Naive thymus-derived CD4-positive, alpha-beta T cell (primary cell): ENCODE measurements at regions of chr6 and their contacts with region 1.

Region 1: DNA sequence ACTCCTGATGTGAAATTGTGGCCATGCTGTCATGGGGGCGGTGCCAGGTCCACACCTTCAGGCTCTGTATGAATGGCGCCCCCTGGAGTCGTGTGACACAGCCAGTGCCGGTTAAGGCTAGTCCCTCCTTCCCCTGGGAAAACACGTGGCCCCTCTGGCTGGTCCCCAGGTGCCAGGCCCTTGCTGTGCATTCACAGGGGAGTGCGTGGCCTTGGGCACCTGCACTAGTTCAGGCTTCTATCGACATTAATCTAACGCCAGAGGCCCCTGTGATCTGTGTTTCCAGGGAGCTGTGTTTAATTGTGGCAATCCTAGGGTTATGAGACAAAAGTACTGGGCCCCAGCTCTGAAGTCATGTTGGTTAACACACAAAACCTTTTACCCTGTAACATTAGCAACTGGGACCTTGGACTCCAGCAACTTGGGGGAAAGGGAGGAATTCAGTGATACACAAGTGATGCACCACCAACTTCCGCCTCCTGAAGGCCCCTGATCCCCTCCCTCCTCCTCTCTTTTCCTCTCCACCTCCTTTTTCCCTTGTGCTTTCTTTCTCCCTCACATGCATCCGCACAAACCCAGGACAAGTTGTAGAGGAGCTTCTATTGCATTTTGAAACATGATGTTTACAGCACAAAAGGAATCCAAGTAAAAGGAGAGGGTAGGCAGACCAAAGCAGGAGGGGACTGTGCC is 74.0 kb downstream of the SSR1 start:
- DNase-seq: peak; percentile 48 to 73 (median 67)
- ATAC-seq: peak; percentile 77
- H3K4me3 ChIP-seq: no peak overlapping the region
- H3K4me3 Mint-ChIP-seq: no peak overlapping the region
- H3K27ac ChIP-seq: peak overlapping the region; percentile 2
- H3K27ac Mint-ChIP-seq: peak overlapping the region in 6 of 9 donors; percentile 39 to 88 (median 75)
- H3K4me1 ChIP-seq: peaks cover 0 to 6% of the 10 kb centered on the region in 2 donors
- H3K4me1 Mint-ChIP-seq: peaks cover 17 to 41% (median 24%) of the 10 kb centered on the region in 7 donors
- H3K27me3 ChIP-seq: no peaks in the 10 kb centered on the region
- H3K27me3 Mint-ChIP-seq: no peaks in the 10 kb centered on the region

Region 2: DNA sequence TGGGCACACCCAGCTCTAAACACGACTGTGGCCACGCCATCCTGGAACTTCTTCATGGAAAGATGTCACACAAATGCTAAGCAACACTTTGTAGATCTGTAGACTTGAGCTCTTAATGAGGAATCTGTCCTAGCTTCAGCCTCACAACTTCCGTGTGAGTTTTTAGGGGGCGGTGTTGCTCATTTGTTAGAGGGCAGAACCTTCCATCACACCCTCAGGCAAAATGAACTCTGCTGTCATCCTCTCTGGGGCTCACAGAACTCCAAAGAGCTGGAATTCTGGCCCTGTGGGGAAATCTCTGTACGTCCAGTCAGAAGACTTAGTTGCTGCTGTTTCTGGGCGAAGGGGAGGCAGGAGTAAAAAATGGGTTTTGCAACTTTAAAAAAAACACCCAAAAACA is 1282.1 kb before region 1 on chr6:
- CTCF ChIA-PET with region 1: no interaction called
- POLR2A ChIA-PET with region 1: no interaction called
- intact Hi-C with region 1: no loop called
- DNase-seq: no peak
- ATAC-seq: no peak
- H3K4me3 ChIP-seq: no peak overlapping the region
- H3K4me3 Mint-ChIP-seq: no peak overlapping the region
- H3K27ac ChIP-seq: no peak overlapping the region
- H3K27ac Mint-ChIP-seq: no peak overlapping the region
- H3K4me1 ChIP-seq: no peaks in the 10 kb centered on the region
- H3K4me1 Mint-ChIP-seq: no peaks in the 10 kb centered on the region
- H3K27me3 ChIP-seq: no peaks in the 10 kb centered on the region
- H3K27me3 Mint-ChIP-seq: peaks cover 0 to 39% (median 9%) of the 10 kb centered on the region in 5 donors

Region 3: GRCh38 chr6:6676910-6677441 is 562.1 kb before region 1 on chr6:
- CTCF ChIA-PET with region 1: interaction called, 9 read pairs
- POLR2A ChIA-PET with region 1: no interaction called
- intact Hi-C with region 1: loop called (anchors 1 kb)
- DNase-seq: peak; percentile 57 to 88 (median 77)
- ATAC-seq: peak; percentile 93
- H3K4me3 ChIP-seq: no peak overlapping the region
- H3K4me3 Mint-ChIP-seq: peak overlapping the region in 8 of 10 donors; percentile 0 to 73 (median 43)
- H3K27ac ChIP-seq: no peak overlapping the region
- H3K27ac Mint-ChIP-seq: peak overlapping the region in 6 of 9 donors; percentile 28 to 95 (median 80)
- H3K4me1 ChIP-seq: peaks cover 0 to 6% of the 10 kb centered on the region in 2 donors
- H3K4me1 Mint-ChIP-seq: peaks cover 4 to 41% (median 11%) of the 10 kb centered on the region in 7 donors
- H3K27me3 ChIP-seq: no peaks in the 10 kb centered on the region
- H3K27me3 Mint-ChIP-seq: peaks cover 0 to 5% (median 0%) of the 10 kb centered on the region in 5 donors

Region 4: GRCh38 chr6:6724539-6725467 is 514.2 kb before region 1 on chr6:
- CTCF ChIA-PET with region 1: interaction called, 26 read pairs
- POLR2A ChIA-PET with region 1: interaction called, 3 read pairs
- intact Hi-C with region 1: loop called (anchors 1 kb)
- DNase-seq: peak; percentile 33 to 74 (median 62)
- ATAC-seq: peak; percentile 82
- H3K4me3 ChIP-seq: peak overlapping the region; percentile 44
- H3K4me3 Mint-ChIP-seq: peak overlapping the region; percentile 67 to 89 (median 81)
- H3K27ac ChIP-seq: no peak overlapping the region
- H3K27ac Mint-ChIP-seq: peak overlapping the region; percentile 47 to 84 (median 74)
- H3K4me1 ChIP-seq: peaks cover 0 to 5% of the 10 kb centered on the region in 2 donors
- H3K4me1 Mint-ChIP-seq: peaks cover 6 to 28% (median 12%) of the 10 kb centered on the region in 7 donors
- H3K27me3 ChIP-seq: no peaks in the 10 kb centered on the region
- H3K27me3 Mint-ChIP-seq: peaks cover 0 to 43% (median 0%) of the 10 kb centered on the region in 5 donors

Region 5: GRCh38 chr6:6788394-6789020 is 450.5 kb before region 1 on chr6:
- CTCF ChIA-PET with region 1: interaction called, 5 read pairs
- POLR2A ChIA-PET with region 1: no interaction called
- intact Hi-C with region 1: loop called in 1 of 2 experiments (anchors 1 kb)
- DNase-seq: peak in 4 of 9 donors; percentile 19 to 26 (median 24)
- ATAC-seq: peak; percentile 69
- H3K4me3 ChIP-seq: no peak overlapping the region
- H3K4me3 Mint-ChIP-seq: no peak overlapping the region
- H3K27ac ChIP-seq: no peak overlapping the region
- H3K27ac Mint-ChIP-seq: no peak overlapping the region
- H3K4me1 ChIP-seq: no peaks in the 10 kb centered on the region
- H3K4me1 Mint-ChIP-seq: peaks cover 0 to 22% (median 4%) of the 10 kb centered on the region in 7 donors
- H3K27me3 ChIP-seq: no peaks in the 10 kb centered on the region
- H3K27me3 Mint-ChIP-seq: peaks cover 0 to 6% (median 0%) of the 10 kb centered on the region in 5 donors

Region 6: GRCh38 chr6:6927521-6928371 is 311.3 kb before region 1 on chr6:
- CTCF ChIA-PET with region 1: no interaction called
- POLR2A ChIA-PET with region 1: no interaction called
- intact Hi-C with region 1: loop called in 1 of 2 experiments (anchors 5 kb)
- DNase-seq: peak in 1 of 9 donors; percentile 13
- ATAC-seq: peak; percentile 71
- H3K4me3 ChIP-seq: no peak overlapping the region
- H3K4me3 Mint-ChIP-seq: no peak overlapping the region
- H3K27ac ChIP-seq: no peak overlapping the region
- H3K27ac Mint-ChIP-seq: no peak overlapping the region
- H3K4me1 ChIP-seq: no peaks in the 10 kb centered on the region
- H3K4me1 Mint-ChIP-seq: peaks cover 0 to 4% (median 0%) of the 10 kb centered on the region in 7 donors
- H3K27me3 ChIP-seq: no peaks in the 10 kb centered on the region
- H3K27me3 Mint-ChIP-seq: peaks cover 4 to 23% (median 9%) of the 10 kb centered on the region in 5 donors

Region 7: DNA sequence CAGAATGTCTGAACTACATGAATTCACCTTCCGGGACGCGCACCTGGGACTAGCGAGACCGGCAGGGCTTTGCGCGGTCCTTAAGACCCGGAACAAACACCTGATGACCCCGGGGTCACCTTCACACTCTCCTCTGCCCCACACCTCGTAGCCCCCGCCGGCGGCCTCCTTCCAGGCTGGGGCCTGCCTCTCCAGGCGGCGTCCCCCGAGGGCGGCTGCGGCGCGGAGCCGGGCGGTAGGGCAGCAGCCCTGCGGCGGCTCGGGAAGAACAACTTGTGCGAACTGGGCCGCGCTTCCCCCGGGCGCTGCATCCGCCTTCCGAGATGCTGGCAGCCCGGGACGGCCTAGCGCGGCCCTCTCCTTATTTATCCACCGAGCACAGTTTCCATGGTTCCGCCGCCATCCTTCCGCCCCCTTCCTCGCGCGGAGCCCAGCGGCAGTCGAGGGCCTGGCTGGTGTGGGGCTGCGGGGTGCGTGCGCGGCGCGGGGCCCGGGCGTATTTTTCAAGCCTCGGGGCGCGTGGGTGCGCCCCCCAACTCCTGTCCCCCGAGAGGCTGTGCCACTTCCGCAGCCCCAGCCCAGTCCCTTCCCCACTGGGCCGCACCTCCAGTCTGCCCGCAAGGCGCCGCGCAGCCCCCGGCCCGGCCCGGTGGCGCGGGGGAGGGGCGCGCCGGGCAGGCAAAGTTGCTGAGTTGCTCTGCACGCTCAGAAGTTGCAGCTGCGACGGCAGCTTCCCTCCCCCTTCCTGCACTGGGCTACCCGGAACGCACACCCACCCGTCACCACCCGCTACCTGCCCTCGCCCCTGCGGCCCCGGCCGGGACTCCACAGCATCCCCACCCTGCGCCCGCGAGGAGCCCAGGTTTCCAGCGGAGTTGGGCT is 187.6 kb before region 1 on chr6:
- CTCF ChIA-PET with region 1: no interaction called
- POLR2A ChIA-PET with region 1: no interaction called
- intact Hi-C with region 1: loop called in 1 of 2 experiments (anchors 1 kb)
- DNase-seq: peak; percentile 34 to 81 (median 70)
- ATAC-seq: peak; percentile 83
- H3K4me3 ChIP-seq: peak overlapping the region; percentile 77
- H3K4me3 Mint-ChIP-seq: peak overlapping the region; percentile 20 to 89 (median 79)
- H3K27ac ChIP-seq: peak overlapping the region; percentile 59
- H3K27ac Mint-ChIP-seq: peak overlapping the region in 6 of 9 donors; percentile 69 to 86 (median 79)
- H3K4me1 ChIP-seq: peaks cover 0 to 4% of the 10 kb centered on the region in 2 donors
- H3K4me1 Mint-ChIP-seq: peaks cover 5 to 18% (median 11%) of the 10 kb centered on the region in 7 donors
- H3K27me3 ChIP-seq: no peaks in the 10 kb centered on the region
- H3K27me3 Mint-ChIP-seq: peaks cover 0 to 66% (median 0%) of the 10 kb centered on the region in 5 donors

Region 8: GRCh38 chr6:7184502-7184901 is 54.5 kb before region 1 on chr6:
- CTCF ChIA-PET with region 1: no interaction called
- POLR2A ChIA-PET with region 1: no interaction called
- intact Hi-C with region 1: no loop called
- DNase-seq: no peak
- ATAC-seq: no peak
- H3K4me3 ChIP-seq: no peak overlapping the region
- H3K4me3 Mint-ChIP-seq: no peak overlapping the region
- H3K27ac ChIP-seq: no peak overlapping the region
- H3K27ac Mint-ChIP-seq: peak overlapping the region in 2 of 9 donors; percentile 25 to 60
- H3K4me1 ChIP-seq: no peaks in the 10 kb centered on the region
- H3K4me1 Mint-ChIP-seq: peaks cover 0 to 7% (median 3%) of the 10 kb centered on the region in 7 donors
- H3K27me3 ChIP-seq: no peaks in the 10 kb centered on the region
- H3K27me3 Mint-ChIP-seq: no peaks in the 10 kb centered on the region